Left cardiac atrium (tissue), 4 donors: ENCODE measurements at regions of chr5 and their contacts with region 1.

Region 1: GRCh38 chr5:78537821-78538220 is 110.8 kb downstream of the LHFPL2 start:
- DNase-seq: no peak
- ATAC-seq: peak; percentile 52 to 80

Region 2: DNA sequence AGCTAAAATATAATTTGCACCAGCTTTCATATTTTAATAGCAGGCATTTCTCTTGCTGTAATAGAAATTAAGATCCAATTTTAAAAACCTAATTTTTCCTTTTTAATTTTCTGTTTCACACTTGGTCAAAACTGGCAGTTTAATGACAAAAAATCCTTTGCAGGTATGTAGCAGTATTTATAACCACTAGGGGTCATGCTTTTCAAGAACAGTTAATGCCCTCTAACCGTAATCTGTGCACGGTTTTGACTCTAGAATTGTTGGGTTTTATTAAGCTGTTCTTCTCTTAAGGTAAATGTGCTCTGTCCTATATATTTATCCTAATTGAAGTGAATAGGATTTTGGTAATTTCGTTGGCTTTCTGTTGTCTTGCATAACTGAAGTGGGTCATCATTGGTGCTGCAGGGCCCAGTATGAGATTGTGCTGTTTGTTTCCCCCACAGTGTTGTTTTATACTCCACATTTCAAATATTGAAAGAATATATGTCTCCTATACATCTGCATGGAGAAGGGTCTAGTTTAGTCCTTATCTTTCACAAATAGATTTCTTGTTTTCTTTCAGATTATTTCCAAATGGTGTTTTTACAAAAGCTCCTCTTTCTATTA is 70.0 kb before region 1 on chr5:
- intact Hi-C with region 1: loop called in 1 of 2 experiments (anchors 5 kb)
- DNase-seq: no peak
- ATAC-seq: peak; percentile 57 to 74

Region 3: DNA sequence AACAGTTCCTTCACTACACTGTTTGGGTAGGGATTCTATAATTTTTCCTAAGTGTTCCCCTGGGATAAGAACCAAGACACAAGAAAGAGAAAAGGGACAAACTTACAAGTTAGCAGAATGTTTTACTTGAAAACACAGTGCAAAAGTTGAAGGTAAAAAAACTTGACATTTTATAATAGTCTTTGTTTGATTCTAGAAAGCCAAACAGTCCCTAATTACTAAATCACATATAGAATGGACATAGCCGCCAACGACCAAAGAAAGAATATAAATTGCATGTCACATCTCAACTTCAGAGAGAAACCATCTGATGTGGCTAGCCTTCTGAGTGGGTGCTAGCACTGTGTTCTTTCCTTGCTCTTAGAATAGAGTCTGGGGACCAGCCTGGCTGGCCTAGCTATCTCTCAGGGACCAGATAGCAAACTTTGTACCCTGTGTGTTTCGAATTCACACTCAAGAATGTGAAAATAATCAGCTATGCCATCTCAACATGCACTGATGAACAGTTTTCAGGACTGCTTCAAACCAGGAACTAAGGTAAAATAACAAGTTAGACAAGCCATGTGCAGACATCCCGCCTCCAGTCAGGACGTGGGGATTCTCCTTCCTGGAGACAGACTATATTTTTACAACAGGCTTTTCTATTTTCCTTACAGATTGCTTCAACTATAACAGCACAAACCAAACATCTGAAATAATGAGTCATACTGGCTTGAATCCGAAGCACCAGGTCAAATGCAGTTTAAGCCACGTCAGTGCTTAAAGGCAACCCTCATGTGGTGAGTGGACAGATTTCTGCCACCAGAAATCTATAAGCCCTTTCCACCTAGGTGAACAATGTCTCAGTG is 57.0 kb after region 1 on chr5:
- intact Hi-C with region 1: no loop called
- DNase-seq: peak; percentile 65
- ATAC-seq: peak; percentile 76 to 89

Region 4: GRCh38 chr5:78899922-78900362 is 362.1 kb after region 1 on chr5:
- intact Hi-C with region 1: loop called in 1 of 2 experiments (anchors 10 kb)
- DNase-seq: no peak
- ATAC-seq: no peak